Endothelial cell of umbilical vein (primary cell): ENCODE measurements at regions of chr10 and their contacts with region 1.

Region 1: DNA sequence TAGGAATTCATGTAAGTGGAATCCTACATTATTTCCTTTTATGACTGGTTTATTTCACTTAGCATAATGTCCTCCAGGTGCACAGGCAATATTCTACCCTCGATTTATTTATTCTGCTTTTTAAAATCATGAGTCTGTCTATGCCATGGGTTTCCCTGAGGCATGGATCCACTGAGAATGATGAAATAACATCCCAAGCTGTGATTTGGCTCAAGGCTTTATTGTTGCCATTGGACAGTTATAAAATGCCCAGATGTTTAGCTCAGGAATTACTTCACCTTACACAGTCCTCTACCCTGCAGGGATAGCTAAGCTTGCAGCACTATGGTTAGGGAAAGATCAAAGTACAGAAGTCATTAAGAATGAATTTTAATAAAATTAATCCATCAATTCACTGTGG is 219.5 kb downstream of the FRMD4A start:
- DNase-seq: no peak
- H3K4me3 ChIP-seq: no peak overlapping the region
- H3K27ac ChIP-seq: no peak overlapping the region
- H3K4me1 ChIP-seq: no peaks in the 10 kb centered on the region
- H3K27me3 ChIP-seq: peaks cover 21 to 37% of the 10 kb centered on the region in 2 experiments
- CTCF ChIP-seq: no peak
- POLR2A ChIP-seq: no peak

Region 2: DNA sequence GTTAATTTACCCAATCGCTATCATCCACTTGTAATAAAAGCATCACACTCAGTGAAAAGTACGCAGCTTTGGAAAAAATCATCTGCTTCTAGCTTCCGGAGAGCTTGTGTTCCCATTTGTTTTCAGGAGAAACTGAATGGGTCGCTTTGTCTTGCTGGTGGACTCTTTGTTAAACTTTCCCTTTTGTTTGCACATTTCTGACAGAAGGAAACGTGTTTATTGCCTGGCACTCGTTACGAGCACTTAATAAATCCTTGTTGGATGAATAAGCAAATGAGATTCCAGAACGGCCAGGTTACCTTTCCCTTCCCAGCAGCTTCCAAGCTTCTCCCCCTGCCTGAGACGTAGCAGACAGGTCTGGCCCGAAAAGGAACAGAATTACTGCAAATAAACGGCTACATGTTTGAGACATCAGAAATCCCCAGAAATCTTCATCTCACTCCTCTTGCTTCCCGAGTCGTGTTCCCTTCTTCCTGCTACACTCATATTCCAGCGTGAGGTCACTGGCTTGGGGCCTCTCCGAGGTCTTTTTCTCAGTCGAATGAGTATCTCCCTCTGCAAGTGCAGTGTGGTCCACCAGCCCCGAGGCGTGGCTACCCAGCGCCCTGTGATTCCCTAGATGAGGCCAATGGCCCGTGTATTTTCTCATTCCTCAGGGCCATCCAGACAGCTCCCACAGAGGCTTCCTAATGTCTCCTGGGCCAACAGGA is 52.3 kb after region 1 on chr10:
- CTCF ChIA-PET with region 1: no interaction called
- POLR2A ChIA-PET with region 1: no interaction called
- dilution Hi-C with region 1: no loop called
- intact Hi-C with region 1: loop called (anchors 5 kb)
- DNase-seq: peak; percentile 6
- H3K4me3 ChIP-seq: no peak overlapping the region
- H3K27ac ChIP-seq: no peak overlapping the region
- H3K4me1 ChIP-seq: no peaks in the 10 kb centered on the region
- H3K27me3 ChIP-seq: peaks cover 26 to 31% of the 10 kb centered on the region in 2 experiments
- CTCF ChIP-seq: no peak
- POLR2A ChIP-seq: no peak